ENCODE measurements at regions of chr7 and their contacts with region 1.

Region 1: GRCh38 chr7:50304158-50304910 is at the start of gene IKZF1:
- DNase-seq: peak; percentile 90 to 94 (median 94)
- H3K4me3 ChIP-seq: peak within 1 kb of the TSS; percentile 84 to 90 (median 87)
- H3K4me3 Mint-ChIP-seq: peak within 1 kb of the TSS; percentile 95 to 100
- H3K27ac ChIP-seq: peak within 1 kb of the TSS; percentile 72 to 92
- H3K27ac Mint-ChIP-seq: peak within 1 kb of the TSS; percentile 87 to 96 (median 92)
- H3K4me1 ChIP-seq: peaks cover 29 to 45% of the 10 kb centered on the region in 2 donors
- H3K4me1 Mint-ChIP-seq: peaks cover 50% of the 10 kb centered on the region
- H3K27me3 ChIP-seq: no peaks in the 10 kb centered on the region
- H3K27me3 Mint-ChIP-seq: peaks cover 1 to 7% (median 3%) of the 10 kb centered on the region in 3 donors
- CTCF ChIP-seq: no peak
- polyA plus RNA-seq, gene IKZF1: 38.4 to 130 (median 80.2) TPM

Region 2: GRCh38 chr7:50229964-50230363 is 74.4 kb before region 1 on chr7:
- intact Hi-C with region 1: loop called in 1 of 2 experiments (anchors 5 kb)
- DNase-seq: peak in 1 of 3 donors; percentile 8
- H3K4me3 ChIP-seq: no peak overlapping the region
- H3K4me3 Mint-ChIP-seq: no peak overlapping the region
- H3K27ac ChIP-seq: no peak overlapping the region
- H3K27ac Mint-ChIP-seq: no peak overlapping the region
- H3K4me1 ChIP-seq: peaks cover 19 to 32% of the 10 kb centered on the region in 2 donors
- H3K4me1 Mint-ChIP-seq: peaks cover 28% of the 10 kb centered on the region
- H3K27me3 ChIP-seq: no peaks in the 10 kb centered on the region
- H3K27me3 Mint-ChIP-seq: no peaks in the 10 kb centered on the region
- CTCF ChIP-seq: peak; percentile 49

Region 3: GRCh38 chr7:50317221-50317678 is 12.9 kb after region 1 on chr7:
- intact Hi-C with region 1: loop called in 1 of 2 experiments (anchors 2 kb)
- DNase-seq: no peak
- H3K4me3 ChIP-seq: no peak overlapping the region
- H3K4me3 Mint-ChIP-seq: no peak overlapping the region
- H3K27ac ChIP-seq: peak overlapping the region in 1 of 2 donors; percentile 79
- H3K27ac Mint-ChIP-seq: peak overlapping the region in 4 of 7 donors; percentile 73 to 89 (median 80)
- H3K4me1 ChIP-seq: peaks cover 67 to 83% of the 10 kb centered on the region in 2 donors
- H3K4me1 Mint-ChIP-seq: peaks cover 92% of the 10 kb centered on the region
- H3K27me3 ChIP-seq: no peaks in the 10 kb centered on the region
- H3K27me3 Mint-ChIP-seq: peaks cover 0 to 1% (median 0%) of the 10 kb centered on the region in 3 donors
- CTCF ChIP-seq: no peak

Region 4: DNA sequence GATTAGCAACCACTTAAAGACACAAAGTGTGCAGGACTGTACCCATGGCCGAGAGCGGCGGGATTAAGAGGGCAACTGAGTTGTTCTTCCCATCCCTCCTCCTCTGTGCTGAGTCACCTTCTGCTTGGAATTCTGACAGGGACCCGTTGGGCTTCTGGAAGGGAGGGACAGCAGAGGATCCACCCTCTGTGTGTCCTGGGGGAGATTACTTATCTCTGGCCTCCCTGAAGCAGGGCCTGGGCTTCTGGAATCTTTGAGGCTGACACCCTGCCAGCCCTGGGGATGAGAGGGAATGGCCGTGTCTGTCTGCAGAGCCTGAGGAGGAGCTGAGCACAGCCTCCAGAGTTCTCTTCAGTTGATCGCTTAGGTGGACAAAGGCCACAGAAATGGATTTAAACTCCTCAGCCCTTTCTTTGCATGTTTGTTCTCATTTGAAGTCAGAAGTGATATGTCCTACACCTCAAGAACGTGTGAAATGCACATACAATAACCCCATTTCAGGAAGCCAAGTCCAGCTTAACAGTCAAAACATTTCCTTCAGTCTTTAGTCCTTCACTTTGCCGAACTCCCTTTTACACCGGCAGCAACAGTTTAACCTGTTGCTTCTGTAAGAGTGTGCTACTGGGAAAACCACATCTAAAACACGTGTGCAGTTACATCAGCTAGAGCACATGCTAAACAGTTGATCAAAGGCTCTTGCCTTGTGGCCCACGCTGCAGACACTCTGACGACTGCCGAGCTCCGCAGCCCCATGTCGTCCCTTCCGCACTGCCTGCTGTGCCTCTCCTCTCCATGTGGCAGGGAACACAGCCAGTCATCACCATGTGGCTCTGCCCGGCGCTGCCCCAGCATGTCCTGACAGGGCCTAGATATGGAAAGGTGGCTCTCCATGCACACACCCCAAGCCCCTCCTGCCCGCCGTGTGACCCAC is 55.9 kb after region 1 on chr7:
- intact Hi-C with region 1: loop called in 1 of 2 experiments (anchors 5 kb)
- DNase-seq: no peak
- H3K4me3 ChIP-seq: no peak overlapping the region
- H3K4me3 Mint-ChIP-seq: no peak overlapping the region
- H3K27ac ChIP-seq: peak overlapping the region in 1 of 2 donors; percentile 72
- H3K27ac Mint-ChIP-seq: peak overlapping the region in 6 of 7 donors; percentile 27 to 82 (median 52)
- H3K4me1 ChIP-seq: peaks cover 47 to 63% of the 10 kb centered on the region in 2 donors
- H3K4me1 Mint-ChIP-seq: peaks cover 78% of the 10 kb centered on the region
- H3K27me3 ChIP-seq: no peaks in the 10 kb centered on the region
- H3K27me3 Mint-ChIP-seq: no peaks in the 10 kb centered on the region
- CTCF ChIP-seq: no peak

Measured in CD14-positive monocyte (primary cell).